ENCODE measurements at regions of chr22 and their contacts with region 1.

Region 1: GRCh38 chr22:37658133-37659065 is at the start of gene PDXP:
- DNase-seq: peak; percentile 98
- H3K4me3 Mint-ChIP-seq: peak within 1 kb of the TSS; percentile 84
- H3K27ac Mint-ChIP-seq: peak within 1 kb of the TSS; percentile 80
- H3K4me1 Mint-ChIP-seq: peaks cover 42% of the 10 kb centered on the region
- H3K27me3 Mint-ChIP-seq: no peaks in the 10 kb centered on the region
- total RNA-seq, gene PDXP: 19.1 to 21.6 TPM

Region 2: GRCh38 chr22:37625737-37626521 is 32.5 kb before region 1 on chr22:
- CTCF ChIA-PET with region 1: interaction called, 9 read pairs
- POLR2A ChIA-PET with region 1: interaction called, 15 read pairs
- DNase-seq: no peak
- H3K4me3 Mint-ChIP-seq: no peak overlapping the region
- H3K27ac Mint-ChIP-seq: no peak overlapping the region
- H3K4me1 Mint-ChIP-seq: peaks cover 47% of the 10 kb centered on the region
- H3K27me3 Mint-ChIP-seq: no peaks in the 10 kb centered on the region

Region 3: DNA sequence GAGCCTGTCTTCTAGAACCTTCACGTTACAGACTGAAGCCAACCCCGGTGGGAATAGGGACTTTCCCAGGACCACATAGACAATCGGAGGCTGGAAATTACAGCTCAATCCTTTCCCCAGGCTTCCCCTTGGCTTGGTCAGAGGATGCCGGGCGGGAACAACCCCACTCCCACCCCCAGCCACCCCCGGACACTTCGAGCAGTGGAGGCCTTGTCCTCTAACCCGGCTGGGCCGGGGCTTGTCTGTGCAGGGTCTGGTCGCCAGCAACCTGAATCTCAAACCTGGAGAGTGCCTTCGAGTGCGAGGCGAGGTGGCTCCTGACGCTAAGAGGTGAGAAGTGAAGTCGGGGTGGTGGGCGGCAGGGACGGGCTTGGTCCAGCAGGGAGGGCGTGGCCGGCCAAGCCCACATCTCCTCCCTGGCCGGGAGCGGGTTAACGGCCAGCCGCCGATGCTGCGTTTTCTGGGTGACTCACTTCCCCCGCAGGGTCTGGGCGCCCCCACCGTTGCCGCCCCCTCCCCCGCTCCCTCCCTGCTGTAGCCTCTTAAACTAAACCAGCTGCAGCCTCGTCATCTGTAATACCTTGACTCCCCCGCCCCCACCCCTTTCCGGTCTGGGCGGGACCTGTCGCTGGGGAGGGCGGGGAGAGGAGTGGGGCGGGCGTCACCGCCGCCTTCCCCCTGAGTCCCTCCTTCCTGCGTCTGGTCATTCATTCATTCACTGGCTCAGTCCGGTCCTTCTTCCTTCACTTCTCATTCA is 18.5 kb after region 1 on chr22:
- CTCF ChIA-PET with region 1: interaction called, 191 read pairs
- POLR2A ChIA-PET with region 1: interaction called, 244 read pairs
- DNase-seq: peak; percentile 96
- H3K4me3 Mint-ChIP-seq: peak overlapping the region; percentile 88
- H3K27ac Mint-ChIP-seq: peak overlapping the region; percentile 99
- H3K4me1 Mint-ChIP-seq: peaks cover 62% of the 10 kb centered on the region
- H3K27me3 Mint-ChIP-seq: no peaks in the 10 kb centered on the region